ENCODE measurements at regions of chr1 and their contacts with region 1.

Region 1: DNA sequence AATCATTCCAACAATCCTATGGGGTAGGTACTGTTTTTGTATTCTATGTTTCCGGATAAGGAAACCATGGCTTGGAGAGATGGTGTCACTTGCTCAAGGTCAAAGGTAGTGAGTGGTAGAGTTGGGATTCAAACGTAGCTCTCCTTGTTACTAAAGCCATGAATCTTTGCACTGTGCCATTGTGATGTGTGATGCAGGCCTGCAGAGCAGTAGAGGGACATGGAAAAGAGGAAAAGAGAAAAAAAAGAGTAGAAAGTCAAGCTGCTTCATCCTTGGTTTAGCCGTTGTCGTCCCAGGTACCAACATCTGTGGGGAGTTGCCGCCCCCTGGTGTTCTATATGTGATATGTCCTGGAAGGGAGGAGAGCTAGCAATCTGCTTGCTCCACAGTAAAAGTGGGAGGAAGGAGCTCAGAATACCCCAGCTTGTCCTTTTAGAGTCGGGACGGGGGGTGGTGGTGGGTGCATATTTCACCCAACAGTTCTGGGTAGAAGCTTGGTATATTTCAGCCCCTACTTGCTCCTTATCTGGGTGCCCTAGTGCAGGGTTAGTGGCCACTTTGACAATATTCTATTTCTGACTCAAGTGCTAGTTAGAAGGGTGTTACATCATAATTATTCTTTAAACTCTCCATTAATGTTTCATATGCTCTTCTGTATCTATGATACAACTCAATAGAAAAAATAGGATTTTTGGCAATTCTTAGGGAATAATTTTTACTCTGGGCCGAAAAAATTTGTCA is 98.4 kb downstream of the EBNA1BP2 start:
- DNase-seq: peak; percentile 57 to 75 (median 71)
- H3K4me3 ChIP-seq: no peak overlapping the region
- H3K4me3 Mint-ChIP-seq: no peak overlapping the region
- H3K27ac ChIP-seq: no peak overlapping the region
- H3K27ac Mint-ChIP-seq: no peak overlapping the region
- H3K4me1 ChIP-seq: peaks cover 11 to 14% of the 10 kb centered on the region in 2 donors
- H3K4me1 Mint-ChIP-seq: peaks cover 23% of the 10 kb centered on the region
- H3K27me3 ChIP-seq: peaks cover 0 to 5% of the 10 kb centered on the region in 2 donors
- H3K27me3 Mint-ChIP-seq: peaks cover 9 to 11% (median 10%) of the 10 kb centered on the region in 3 donors
- CTCF ChIP-seq: peak; percentile 90

Region 2: GRCh38 chr1:42777852-42778251 is 295.8 kb before region 1 on chr1:
- intact Hi-C with region 1: loop called in 1 of 2 experiments (anchors 5 kb)
- DNase-seq: peak in 2 of 3 donors; percentile 13 to 31
- H3K4me3 ChIP-seq: no peak overlapping the region
- H3K4me3 Mint-ChIP-seq: no peak overlapping the region
- H3K27ac ChIP-seq: no peak overlapping the region
- H3K27ac Mint-ChIP-seq: peak overlapping the region in 1 of 7 donors; percentile 27
- H3K4me1 ChIP-seq: no peaks in the 10 kb centered on the region
- H3K4me1 Mint-ChIP-seq: no peaks in the 10 kb centered on the region
- H3K27me3 ChIP-seq: no peaks in the 10 kb centered on the region
- H3K27me3 Mint-ChIP-seq: no peaks in the 10 kb centered on the region
- CTCF ChIP-seq: peak; percentile 60

Region 3: DNA sequence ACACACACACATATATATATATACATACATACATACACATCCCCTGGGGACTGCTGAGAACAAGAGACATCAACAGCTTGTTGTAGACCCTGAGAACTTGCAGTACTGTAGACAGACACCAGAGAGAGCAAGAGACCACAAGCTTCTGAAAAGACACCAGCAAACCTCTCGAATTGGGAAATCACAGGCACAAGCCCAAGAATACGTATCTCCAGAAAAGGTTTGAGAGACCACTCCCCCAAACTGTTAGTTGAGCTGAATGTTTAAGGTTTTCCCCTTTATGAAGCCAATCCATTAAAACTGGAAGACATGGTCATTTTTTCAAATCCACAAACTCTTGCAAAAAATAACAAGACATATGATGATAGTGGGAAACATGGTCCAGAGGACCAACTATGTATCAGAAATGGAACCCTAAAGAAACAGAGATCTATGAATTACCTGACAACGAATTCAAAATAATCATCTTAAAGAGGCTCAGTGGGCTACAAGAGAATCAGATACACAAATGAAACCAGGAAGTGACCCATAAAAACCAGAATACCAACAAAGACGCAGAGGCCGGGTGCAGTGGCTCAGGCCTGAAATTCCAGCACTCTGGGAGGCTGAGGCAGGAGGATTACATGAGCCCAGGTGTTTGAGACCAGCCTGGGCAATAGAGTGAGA is 160.1 kb before region 1 on chr1:
- intact Hi-C with region 1: loop called (anchors 1 to 2 kb)
- DNase-seq: peak; percentile 71 to 80 (median 79)
- H3K4me3 ChIP-seq: no peak overlapping the region
- H3K4me3 Mint-ChIP-seq: no peak overlapping the region
- H3K27ac ChIP-seq: no peak overlapping the region
- H3K27ac Mint-ChIP-seq: peak overlapping the region in 1 of 7 donors; percentile 12
- H3K4me1 ChIP-seq: no peaks in the 10 kb centered on the region
- H3K4me1 Mint-ChIP-seq: no peaks in the 10 kb centered on the region
- H3K27me3 ChIP-seq: no peaks in the 10 kb centered on the region
- H3K27me3 Mint-ChIP-seq: peaks cover 0 to 6% (median 2%) of the 10 kb centered on the region in 3 donors
- CTCF ChIP-seq: peak; percentile 77

Measured in CD14-positive monocyte (primary cell).